ENCODE measurements at regions of chr15 and their contacts with region 1.

Region 1: DNA sequence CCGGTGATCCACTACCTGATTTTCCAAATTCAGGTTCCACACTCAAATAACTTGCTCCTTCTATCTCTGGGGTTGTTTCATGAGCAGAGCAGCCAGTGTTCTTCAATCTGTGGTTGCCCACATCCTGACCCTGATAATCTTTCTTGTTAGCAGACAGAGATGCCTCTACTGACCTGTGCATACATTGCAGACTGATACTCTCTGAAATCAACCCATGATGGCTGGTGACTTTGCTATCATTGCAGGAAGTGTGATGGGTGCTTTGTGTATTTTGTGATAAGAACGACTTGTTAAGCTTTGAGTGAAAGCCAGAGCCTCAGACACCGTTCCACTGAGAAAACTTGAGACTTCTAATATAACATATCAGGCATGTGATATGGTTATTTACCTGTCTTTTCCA is 39.9 kb downstream of the GATM start:
- DNase-seq: no peak
- H3K4me3 Mint-ChIP-seq: no peak overlapping the region
- H3K27ac Mint-ChIP-seq: no peak overlapping the region
- H3K4me1 Mint-ChIP-seq: peaks cover 8% of the 10 kb centered on the region
- H3K27me3 Mint-ChIP-seq: no peaks in the 10 kb centered on the region
- CTCF ChIP-seq: no peak

Region 2: DNA sequence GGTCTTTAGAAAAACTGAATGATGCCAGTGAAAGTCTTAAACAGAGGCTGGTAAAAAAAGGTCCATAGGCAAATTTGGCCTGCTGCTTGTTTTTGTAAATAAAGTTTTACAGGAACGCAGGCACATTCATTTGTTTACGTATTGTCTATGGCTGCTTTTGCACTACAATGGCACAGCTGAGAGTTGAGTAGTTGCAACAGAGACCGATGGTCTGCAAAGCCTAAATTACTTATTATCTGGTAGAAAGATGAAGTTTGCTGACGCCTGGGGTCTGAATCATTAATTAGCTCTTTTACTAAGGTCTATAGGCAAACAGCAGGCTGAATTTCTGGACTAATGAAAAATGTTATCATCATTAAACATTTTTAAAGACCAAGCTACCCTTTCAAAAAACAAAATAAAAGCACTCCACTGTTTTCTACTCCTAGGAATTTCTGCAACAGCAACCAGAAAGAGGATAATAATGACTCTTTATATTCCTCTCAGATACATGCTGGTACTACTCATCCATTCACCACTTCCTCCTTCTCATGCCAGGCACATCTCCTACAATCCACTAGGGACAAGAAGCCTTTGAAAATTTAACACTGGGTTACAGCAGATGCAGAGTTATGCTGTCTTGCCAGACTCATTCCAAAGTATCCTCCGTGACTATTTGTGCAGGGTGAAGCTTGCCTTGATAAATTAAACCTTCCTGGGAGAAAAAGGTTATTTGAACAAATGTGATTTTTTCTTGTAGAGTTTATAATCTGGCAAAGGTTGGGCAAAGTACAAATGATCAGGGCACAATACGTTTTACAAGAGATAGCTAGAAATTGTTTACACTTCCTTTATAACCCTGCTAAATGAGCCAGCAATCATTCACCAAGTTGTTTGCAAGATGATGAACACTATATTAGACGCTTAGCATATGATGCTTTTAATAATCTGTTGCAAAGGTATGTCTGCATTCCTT is 33.9 kb after region 1 on chr15:
- CTCF ChIA-PET with region 1: interaction called, 4 read pairs
- intact Hi-C with region 1: loop called (anchors 5 kb)
- DNase-seq: peak; percentile 11
- H3K4me3 Mint-ChIP-seq: no peak overlapping the region
- H3K27ac Mint-ChIP-seq: no peak overlapping the region
- H3K4me1 Mint-ChIP-seq: peaks cover 42% of the 10 kb centered on the region
- H3K27me3 Mint-ChIP-seq: peaks cover 12% of the 10 kb centered on the region
- CTCF ChIP-seq: no peak